ENCODE measurements at regions of chr3 and their contacts with region 1.

Region 1: DNA sequence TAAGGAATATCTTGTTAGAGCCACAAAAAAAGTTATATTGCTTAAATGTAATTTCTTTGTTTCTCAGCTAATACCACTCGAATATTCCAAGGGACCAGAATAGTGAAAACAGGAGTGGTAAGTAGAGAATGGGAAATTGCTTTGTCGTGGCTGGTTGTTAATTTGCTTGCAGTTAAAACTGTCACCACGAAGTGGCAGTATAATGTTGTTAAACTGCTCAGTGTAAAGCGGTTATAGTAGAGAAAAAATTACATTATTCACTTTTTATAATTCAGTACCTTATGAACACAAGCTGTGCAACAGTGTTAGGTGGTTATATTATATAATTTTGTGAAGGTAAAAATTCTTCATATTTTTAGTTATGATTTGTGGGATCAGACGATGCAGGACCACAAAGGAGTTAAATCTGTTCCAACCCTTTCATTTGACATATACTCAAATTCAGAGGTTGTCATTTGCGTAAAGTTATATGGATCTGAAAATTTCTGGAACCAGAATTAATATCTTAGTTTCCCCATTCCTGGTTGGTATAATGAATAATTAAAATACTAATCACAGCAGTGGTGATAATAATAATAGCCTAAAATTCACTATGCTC is 171.8 kb downstream of the FEZF2 start:
- DNase-seq: peak; percentile 22 to 58 (median 53)
- H3K4me3 ChIP-seq: no peak overlapping the region
- H3K27ac ChIP-seq: no peak overlapping the region
- H3K4me1 ChIP-seq: no peaks in the 10 kb centered on the region
- H3K27me3 ChIP-seq: peaks cover 0 to 2% (median 0%) of the 10 kb centered on the region in 5 experiments

Region 2: DNA sequence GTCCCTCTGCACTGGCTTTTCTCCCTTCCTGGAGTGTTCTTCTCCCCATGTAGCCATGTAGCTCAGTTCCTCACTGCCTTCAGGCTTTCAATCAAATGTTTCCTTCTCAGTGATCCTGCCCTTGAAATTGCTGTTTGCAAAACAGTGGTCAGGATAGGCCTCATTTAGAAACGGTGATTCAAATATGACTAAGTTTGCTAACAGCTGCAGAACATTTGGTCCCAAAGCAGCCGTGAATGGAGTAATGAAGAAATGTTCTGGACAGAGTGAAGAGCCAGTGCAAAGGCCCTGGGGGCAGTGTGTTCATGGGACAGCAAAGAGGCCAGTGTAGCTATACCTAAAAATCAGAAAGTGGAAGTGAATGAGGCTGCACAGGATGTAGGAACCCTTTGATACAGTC is 51.6 kb before region 1 on chr3:
- CTCF ChIA-PET with region 1: no interaction called
- POLR2A ChIA-PET with region 1: no interaction called
- DNase-seq: no peak
- H3K4me3 ChIP-seq: no peak overlapping the region
- H3K27ac ChIP-seq: no peak overlapping the region
- H3K4me1 ChIP-seq: peaks cover 0 to 1% (median 0%) of the 10 kb centered on the region in 4 experiments
- H3K27me3 ChIP-seq: no peaks in the 10 kb centered on the region

Region 3: GRCh38 chr3:62188681-62189383 is 12.7 kb before region 1 on chr3:
- CTCF ChIA-PET with region 1: interaction called, 12 read pairs
- POLR2A ChIA-PET with region 1: no interaction called
- DNase-seq: peak; percentile 68 to 82 (median 81)
- H3K4me3 ChIP-seq: peak overlapping the region in 3 of 7 experiments; percentile 34 to 56 (median 50)
- H3K27ac ChIP-seq: no peak overlapping the region
- H3K4me1 ChIP-seq: peaks cover 0 to 3% (median 0%) of the 10 kb centered on the region in 4 experiments
- H3K27me3 ChIP-seq: peaks cover 0 to 2% (median 0%) of the 10 kb centered on the region in 5 experiments

Region 4: DNA sequence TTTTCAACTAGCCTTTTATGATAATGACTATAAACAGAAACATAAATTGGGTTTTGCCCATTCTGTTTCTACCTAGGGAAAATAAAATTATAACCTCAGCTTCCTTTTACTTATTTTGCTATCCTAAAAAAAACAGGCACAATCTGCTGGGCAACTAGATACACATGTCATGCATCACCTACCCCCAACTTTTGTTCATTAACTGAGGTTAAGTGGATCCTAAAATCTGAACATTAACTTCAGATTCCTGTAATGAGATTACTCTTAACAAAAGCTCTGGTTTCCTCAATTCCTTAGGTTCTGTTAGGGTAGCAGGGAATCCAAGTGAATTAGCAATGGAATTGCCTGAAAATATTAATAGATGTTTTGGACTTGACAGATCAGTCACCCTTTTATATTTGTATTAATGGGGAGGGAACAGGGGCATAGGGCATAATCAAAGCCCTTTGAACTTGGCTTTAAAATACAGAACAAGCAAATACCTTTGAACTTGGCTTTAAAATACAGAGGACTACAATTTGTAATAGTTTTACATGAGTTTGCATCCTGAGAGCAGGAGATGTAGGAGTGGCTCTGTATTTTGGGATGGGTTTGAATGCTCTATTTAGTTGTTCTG is 65.2 kb after region 1 on chr3:
- CTCF ChIA-PET with region 1: no interaction called
- POLR2A ChIA-PET with region 1: no interaction called
- DNase-seq: no peak
- H3K4me3 ChIP-seq: no peak overlapping the region
- H3K27ac ChIP-seq: no peak overlapping the region
- H3K4me1 ChIP-seq: no peaks in the 10 kb centered on the region
- H3K27me3 ChIP-seq: no peaks in the 10 kb centered on the region

Region 5: GRCh38 chr3:62558549-62559112 is 357.1 kb after region 1 on chr3:
- CTCF ChIA-PET with region 1: interaction called, 18 read pairs
- POLR2A ChIA-PET with region 1: no interaction called
- DNase-seq: peak; percentile 9 to 25 (median 10)
- H3K4me3 ChIP-seq: no peak overlapping the region
- H3K27ac ChIP-seq: no peak overlapping the region
- H3K4me1 ChIP-seq: no peaks in the 10 kb centered on the region
- H3K27me3 ChIP-seq: peaks cover 0 to 2% (median 0%) of the 10 kb centered on the region in 5 experiments